ENCODE measurements at regions of chr1 and their contacts with region 1.

Region 1: DNA sequence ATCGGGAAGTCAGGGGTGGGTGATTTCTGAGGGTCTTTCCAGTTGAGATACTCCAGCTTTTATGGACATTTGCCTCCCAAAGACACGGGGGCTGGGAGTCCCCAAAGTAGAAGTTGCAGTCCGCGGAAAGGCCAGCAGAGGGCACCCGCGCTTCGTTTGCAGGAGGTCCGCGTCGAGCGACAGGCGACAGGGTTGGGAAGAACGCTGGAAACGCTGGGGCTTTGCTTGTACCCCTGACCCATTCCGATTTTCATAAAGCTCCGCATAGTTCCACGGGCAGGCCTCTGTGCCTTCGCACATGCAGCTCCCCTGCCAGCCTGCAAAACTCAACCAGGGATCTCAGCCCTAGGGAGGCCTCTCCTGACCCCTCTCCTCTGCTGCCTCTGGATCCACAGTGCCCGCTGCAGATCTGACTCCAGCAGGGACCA is 44.2 kb upstream of the LAPTM5 start:
- DNase-seq: no peak
- H3K4me3 ChIP-seq: no peak overlapping the region
- H3K27ac ChIP-seq: no peak overlapping the region
- H3K27me3 ChIP-seq: no peaks in the 10 kb centered on the region
- CTCF ChIP-seq: peak; percentile 97

Region 2: DNA sequence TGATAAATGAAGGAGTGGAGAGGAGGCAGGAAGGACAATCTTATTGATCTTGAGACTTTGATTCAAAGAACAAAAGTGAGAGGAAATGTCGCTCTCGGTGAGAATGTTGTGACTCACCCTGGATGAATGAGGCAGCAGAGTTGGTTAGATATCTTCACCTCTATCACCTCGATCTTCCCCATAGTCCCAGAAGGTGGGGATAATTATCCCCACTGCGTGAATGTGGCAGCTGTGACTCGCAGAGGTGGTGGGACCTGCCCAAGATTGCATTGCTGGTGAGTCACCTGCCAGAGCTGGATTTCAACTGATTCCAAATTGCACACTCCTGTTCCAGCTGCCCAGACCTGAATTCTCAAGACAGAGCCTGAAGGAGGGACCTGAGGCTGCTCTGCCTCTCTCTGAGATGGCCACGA is 183.4 kb before region 1 on chr1:
- CTCF ChIA-PET with region 1: no interaction called
- POLR2A ChIA-PET with region 1: no interaction called
- DNase-seq: no peak
- H3K4me3 ChIP-seq: no peak overlapping the region
- H3K27ac ChIP-seq: no peak overlapping the region
- H3K27me3 ChIP-seq: no peaks in the 10 kb centered on the region
- CTCF ChIP-seq: no peak

Region 3: GRCh38 chr1:30718636-30719405 is 83.0 kb before region 1 on chr1:
- CTCF ChIA-PET with region 1: interaction called, 29 read pairs
- POLR2A ChIA-PET with region 1: interaction called, 3 read pairs
- DNase-seq: peak; percentile 95
- H3K4me3 ChIP-seq: peak overlapping the region; percentile 66
- H3K27ac ChIP-seq: peak overlapping the region; percentile 99
- H3K27me3 ChIP-seq: no peaks in the 10 kb centered on the region
- CTCF ChIP-seq: peak; percentile 84

Region 4: GRCh38 chr1:30816211-30817076 is 14.7 kb after region 1 on chr1:
- CTCF ChIA-PET with region 1: interaction called, 28 read pairs
- POLR2A ChIA-PET with region 1: no interaction called
- DNase-seq: peak; percentile 45
- H3K4me3 ChIP-seq: no peak overlapping the region
- H3K27ac ChIP-seq: peak overlapping the region; percentile 77
- H3K27me3 ChIP-seq: no peaks in the 10 kb centered on the region
- CTCF ChIP-seq: no peak

Region 5: DNA sequence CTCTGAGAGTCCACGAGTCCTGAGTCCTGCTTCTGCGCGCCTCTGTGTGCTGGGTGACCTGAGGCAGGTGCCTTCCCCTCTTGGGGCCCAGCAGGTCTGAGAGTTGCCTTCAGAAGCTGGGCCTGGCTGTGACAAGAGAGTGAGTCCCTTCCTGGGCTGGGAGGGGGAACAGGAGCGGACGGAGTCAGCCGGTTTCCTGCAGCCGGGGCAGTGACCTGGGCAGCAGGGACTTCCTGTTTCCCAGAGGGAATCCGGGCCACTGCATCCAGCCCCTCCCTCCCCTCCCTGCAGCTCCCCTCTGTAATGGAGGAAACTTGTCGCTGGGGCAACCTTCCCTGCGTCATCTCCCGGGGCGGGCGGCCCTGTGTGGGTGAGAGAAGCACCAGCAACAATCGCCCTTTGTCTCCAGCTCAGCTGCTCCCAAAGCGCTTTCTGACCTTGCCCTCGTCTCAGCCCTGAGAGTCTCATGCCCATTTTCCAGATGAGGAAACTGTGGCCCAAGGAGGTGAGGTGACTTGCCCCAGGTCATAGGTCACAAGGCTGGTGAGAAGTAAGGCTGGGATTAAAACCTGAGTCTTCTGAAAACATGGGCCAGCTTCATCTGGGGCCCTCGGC is 45.7 kb after region 1 on chr1:
- CTCF ChIA-PET with region 1: interaction called, 22 read pairs
- POLR2A ChIA-PET with region 1: no interaction called
- DNase-seq: peak; percentile 50
- H3K4me3 ChIP-seq: no peak overlapping the region
- H3K27ac ChIP-seq: peak overlapping the region; percentile 47
- H3K27me3 ChIP-seq: peaks cover 4% of the 10 kb centered on the region
- CTCF ChIP-seq: no peak

Region 6: GRCh38 chr1:30877205-30877912 is 75.6 kb after region 1 on chr1:
- CTCF ChIA-PET with region 1: interaction called, 12 read pairs
- POLR2A ChIA-PET with region 1: no interaction called
- DNase-seq: peak; percentile 38
- H3K4me3 ChIP-seq: no peak overlapping the region
- H3K27ac ChIP-seq: peak overlapping the region; percentile 62
- H3K27me3 ChIP-seq: no peaks in the 10 kb centered on the region
- CTCF ChIP-seq: no peak

Region 7: GRCh38 chr1:30919025-30919881 is 117.5 kb after region 1 on chr1:
- CTCF ChIA-PET with region 1: interaction called, 535 read pairs
- POLR2A ChIA-PET with region 1: interaction called, 3 read pairs
- DNase-seq: peak; percentile 55
- H3K4me3 ChIP-seq: no peak overlapping the region
- H3K27ac ChIP-seq: no peak overlapping the region
- H3K27me3 ChIP-seq: no peaks in the 10 kb centered on the region
- CTCF ChIP-seq: peak; percentile 31; the same call in 1 of the 2 replicates

Region 8: GRCh38 chr1:30955448-30956015 is 153.7 kb after region 1 on chr1:
- CTCF ChIA-PET with region 1: no interaction called
- POLR2A ChIA-PET with region 1: no interaction called
- DNase-seq: no peak
- H3K4me3 ChIP-seq: no peak overlapping the region
- H3K27ac ChIP-seq: no peak overlapping the region
- H3K27me3 ChIP-seq: no peaks in the 10 kb centered on the region
- CTCF ChIP-seq: no peak

Region 9: DNA sequence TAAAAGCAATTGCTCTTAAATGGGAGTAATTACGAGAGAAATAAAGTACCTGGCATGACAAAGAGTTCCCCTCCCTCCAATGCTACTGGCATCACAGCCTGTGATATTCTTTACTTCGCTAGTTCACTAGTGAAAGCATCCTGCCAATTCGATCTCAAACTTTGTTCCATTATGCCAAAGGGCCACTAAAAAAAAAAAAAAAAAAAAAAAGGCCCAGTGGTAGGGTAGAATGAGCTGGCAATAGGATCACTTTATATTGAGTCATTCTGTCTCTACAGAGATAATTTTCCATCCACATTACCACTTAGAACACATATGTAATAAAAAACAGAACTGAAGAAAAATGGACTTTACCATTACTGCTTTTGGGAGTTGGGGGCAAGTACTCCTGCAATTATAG is 252.6 kb after region 1 on chr1:
- CTCF ChIA-PET with region 1: no interaction called
- POLR2A ChIA-PET with region 1: no interaction called
- DNase-seq: no peak
- H3K4me3 ChIP-seq: no peak overlapping the region
- H3K27ac ChIP-seq: no peak overlapping the region
- H3K27me3 ChIP-seq: no peaks in the 10 kb centered on the region
- CTCF ChIP-seq: no peak

Measured in AG04450 (cell line).